Activated T-helper 1 cell treated with anti-CD3 and anti-CD28 coated beads, Interleukin-12 subunit alpha, Interleukin-12 subunit beta, Interleukin-2, Interleukin-4 antibody, amounts not matched to agents 30 ng/mL and 10 ng/mL and 1 ng/mL, durations not matched to agents 14 hours and 24 hours and 36 hours (primary cell): ENCODE measurements at regions of chr9 and their contacts with region 1.

Region 1: DNA sequence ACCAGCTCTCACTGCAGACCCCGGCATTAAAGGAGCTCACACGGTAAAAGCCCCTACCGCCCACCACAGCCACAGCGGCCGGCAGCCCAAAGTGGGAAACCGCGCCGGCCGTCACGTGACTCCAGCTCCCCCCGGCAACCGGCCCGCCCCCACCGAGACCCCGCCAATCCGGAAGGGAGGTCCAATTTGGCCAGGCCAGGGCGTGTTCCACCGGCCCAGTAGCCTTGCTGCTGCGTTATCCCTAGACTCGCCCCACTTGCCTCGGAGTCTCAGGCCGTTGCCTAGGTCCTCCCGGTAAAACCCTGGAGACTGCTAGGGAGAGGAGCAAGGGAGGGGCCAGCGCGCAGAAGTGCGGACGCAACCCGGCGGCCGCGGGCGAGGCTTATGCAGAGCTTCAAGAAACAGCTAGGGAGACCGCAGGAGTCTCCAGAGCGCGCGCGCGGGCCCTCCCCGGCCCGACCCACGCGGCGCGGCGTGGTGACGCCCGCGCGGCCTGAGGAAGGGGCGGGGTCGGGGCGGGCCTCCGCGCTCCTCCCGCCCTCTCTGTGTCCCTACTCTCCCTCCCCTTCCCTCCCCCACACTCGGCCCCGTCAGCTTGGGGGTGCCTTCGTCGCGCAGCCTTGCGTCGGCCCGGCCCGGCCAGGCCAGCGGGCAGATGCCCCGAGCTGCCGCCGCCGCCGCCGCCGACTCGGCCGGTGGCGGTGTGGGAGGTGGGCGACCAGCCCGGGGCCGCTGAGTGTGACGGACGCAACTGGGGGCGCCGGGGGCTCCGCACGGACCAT is at the start of gene RIC1:
- DNase-seq: peak; percentile 90
- H3K4me3 Mint-ChIP-seq: peak within 1 kb of the TSS; percentile 99
- H3K27ac Mint-ChIP-seq: peak within 1 kb of the TSS; percentile 98
- H3K4me1 Mint-ChIP-seq: peaks cover 74% of the 10 kb centered on the region
- H3K27me3 Mint-ChIP-seq: no peaks in the 10 kb centered on the region
- total RNA-seq, gene RIC1: 20.9 and 22.3 TPM in 2 replicates

Region 2: GRCh38 chr9:4679268-4680172 is 949.2 kb before region 1 on chr9 and contains the start of gene CDC37L1:
- intact Hi-C with region 1: loop called (anchors 5 kb)
- DNase-seq: peak; percentile 98
- H3K4me3 Mint-ChIP-seq: no peak within 1 kb of the TSS
- H3K27ac Mint-ChIP-seq: no peak within 1 kb of the TSS
- H3K4me1 Mint-ChIP-seq: peaks cover 7% of the 10 kb centered on the region
- H3K27me3 Mint-ChIP-seq: no peaks in the 10 kb centered on the region
- total RNA-seq, gene CDC37L1: 11.1 and 11.3 TPM in 2 replicates

Region 3: GRCh38 chr9:4832786-4833579 is 795.7 kb before region 1 on chr9:
- intact Hi-C with region 1: loop called (anchors 10 kb)
- DNase-seq: peak; percentile 48
- H3K4me3 Mint-ChIP-seq: peak overlapping the region; percentile 53
- H3K27ac Mint-ChIP-seq: peak overlapping the region; percentile 96
- H3K4me1 Mint-ChIP-seq: peaks cover 60% of the 10 kb centered on the region
- H3K27me3 Mint-ChIP-seq: no peaks in the 10 kb centered on the region

Region 4: GRCh38 chr9:5178126-5178805 is 450.5 kb before region 1 on chr9:
- intact Hi-C with region 1: no loop called
- DNase-seq: peak; percentile 11
- H3K4me3 Mint-ChIP-seq: no peak overlapping the region
- H3K27ac Mint-ChIP-seq: peak overlapping the region; percentile 15
- H3K4me1 Mint-ChIP-seq: peaks cover 11% of the 10 kb centered on the region
- H3K27me3 Mint-ChIP-seq: no peaks in the 10 kb centered on the region

Region 5: DNA sequence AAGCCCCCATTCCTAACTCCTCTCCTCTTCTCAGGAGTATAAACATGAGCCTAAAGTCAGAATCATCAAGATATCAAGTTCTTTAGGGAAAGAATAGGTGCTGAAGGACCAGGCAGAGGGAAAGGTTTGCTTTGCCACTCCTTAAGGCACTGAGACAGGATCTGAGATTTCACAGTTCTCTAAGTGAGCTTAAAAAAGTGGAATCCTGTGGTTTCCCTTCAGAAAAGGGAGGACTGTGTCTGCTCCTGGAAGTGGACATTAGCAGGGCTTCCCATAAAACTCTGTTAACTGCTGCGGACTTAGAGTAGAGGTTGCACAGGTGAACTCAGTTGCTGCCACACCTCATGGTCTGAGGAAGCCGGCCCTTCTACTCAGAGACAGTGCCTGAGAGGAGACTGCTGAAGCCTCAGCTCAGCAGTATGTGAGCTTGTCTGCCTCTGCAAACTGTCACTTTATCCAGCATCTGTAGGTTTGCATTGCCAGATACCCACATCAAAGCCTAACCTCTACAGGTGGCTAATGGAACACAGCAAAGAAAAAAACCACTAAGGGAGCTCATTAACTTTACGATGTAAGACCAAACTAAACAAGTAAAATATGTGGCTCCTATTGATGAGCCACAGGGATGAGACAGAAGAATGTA is 43.1 kb after region 1 on chr9:
- intact Hi-C with region 1: loop called (anchors 5 kb)
- DNase-seq: peak; percentile 6
- H3K4me3 Mint-ChIP-seq: no peak overlapping the region
- H3K27ac Mint-ChIP-seq: no peak overlapping the region
- H3K4me1 Mint-ChIP-seq: peaks cover 15% of the 10 kb centered on the region
- H3K27me3 Mint-ChIP-seq: no peaks in the 10 kb centered on the region

Region 6: GRCh38 chr9:5832543-5833529 is 204.1 kb after region 1 on chr9 and contains the start of gene ERMP1:
- intact Hi-C with region 1: loop called (anchors 1 kb)
- DNase-seq: peak; percentile 89
- H3K4me3 Mint-ChIP-seq: peak within 1 kb of the TSS; percentile 92
- H3K27ac Mint-ChIP-seq: peak within 1 kb of the TSS; percentile 82
- H3K4me1 Mint-ChIP-seq: peaks cover 62% of the 10 kb centered on the region
- H3K27me3 Mint-ChIP-seq: no peaks in the 10 kb centered on the region
- total RNA-seq, gene ERMP1: 23.1 and 24.1 TPM in 2 replicates

Region 7: DNA sequence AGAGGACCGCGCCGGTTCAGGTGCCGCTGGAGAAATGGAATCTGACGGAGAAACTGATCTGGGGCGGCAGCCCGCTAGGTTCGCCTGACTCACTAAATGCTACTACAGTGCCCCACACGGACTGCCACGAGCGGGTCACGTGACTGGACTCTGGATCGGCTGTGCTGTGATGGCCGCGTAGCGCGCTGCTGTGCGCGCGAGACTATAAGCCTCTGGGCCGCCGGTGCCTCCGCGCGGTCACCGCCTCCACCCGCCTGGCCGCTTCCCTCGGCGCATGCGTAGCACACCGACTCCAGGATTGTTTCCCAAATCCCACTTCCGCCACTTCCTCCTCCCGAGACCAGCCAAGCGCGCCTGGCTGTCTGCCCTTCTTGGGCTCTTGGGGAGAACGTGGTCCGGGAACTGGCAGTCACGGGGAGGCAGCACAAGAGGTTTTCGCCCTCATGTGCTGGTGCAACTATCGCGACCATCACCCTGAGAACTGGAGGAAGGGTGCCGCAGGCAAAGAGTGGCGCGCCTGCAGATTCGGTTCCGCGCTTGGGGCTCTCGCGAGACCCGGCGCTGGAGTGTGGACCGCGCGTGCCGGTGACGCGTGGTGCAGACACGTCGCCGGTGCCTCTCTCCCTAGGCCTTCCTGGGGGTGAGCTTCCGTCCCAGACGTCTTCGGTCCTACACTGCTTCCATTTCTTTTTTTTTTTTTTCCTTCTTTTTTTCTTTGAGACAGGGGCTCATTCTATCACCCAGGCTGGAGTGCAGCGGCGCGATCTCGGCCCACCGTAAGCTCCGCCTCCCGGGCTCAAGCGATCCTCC is 1052.6 kb after region 1 on chr9:
- intact Hi-C with region 1: loop called (anchors 2 kb)
- DNase-seq: peak; percentile 88
- H3K4me3 Mint-ChIP-seq: peak overlapping the region; percentile 94
- H3K27ac Mint-ChIP-seq: peak overlapping the region; percentile 99
- H3K4me1 Mint-ChIP-seq: peaks cover 24% of the 10 kb centered on the region
- H3K27me3 Mint-ChIP-seq: peaks cover 3% of the 10 kb centered on the region